Tibial artery (tissue), 4 donors: ENCODE measurements at regions of chr11 and their contacts with region 1.

Region 1: GRCh38 chr11:31173926-31174680 is 195.4 kb downstream of the DCDC1 start:
- DNase-seq: no peak
- H3K4me3 ChIP-seq: no peak overlapping the region
- H3K27ac ChIP-seq: no peak overlapping the region
- H3K4me1 ChIP-seq: no peaks in the 10 kb centered on the region
- H3K27me3 ChIP-seq: no peaks in the 10 kb centered on the region
- CTCF ChIP-seq: no peak

Region 2: GRCh38 chr11:32861850-32862577 is 1687.9 kb after region 1 on chr11:
- intact Hi-C with region 1: loop called (anchors 5 kb)
- DNase-seq: no peak
- H3K4me3 ChIP-seq: no peak overlapping the region
- H3K27ac ChIP-seq: no peak overlapping the region
- H3K4me1 ChIP-seq: no peaks in the 10 kb centered on the region
- H3K27me3 ChIP-seq: no peaks in the 10 kb centered on the region
- CTCF ChIP-seq: no peak